Activated naive CD8-positive, alpha-beta T cell treated with anti-CD3 and anti-CD28 coated beads, Interleukin-2, amount 10 ng/mL, durations not matched to agents 7 days and 5 days (primary cell): ENCODE measurements at regions of chr12 and their contacts with region 1.

Region 1: GRCh38 chr12:22812531-22812930 is 187.6 kb downstream of the ETNK1 start:
- DNase-seq: no peak
- ATAC-seq: no peak
- H3K4me3 Mint-ChIP-seq: no peak overlapping the region
- H3K27ac Mint-ChIP-seq: no peak overlapping the region
- H3K4me1 Mint-ChIP-seq: no peaks in the 10 kb centered on the region
- H3K27me3 Mint-ChIP-seq: peaks cover 3% of the 10 kb centered on the region

Region 2: DNA sequence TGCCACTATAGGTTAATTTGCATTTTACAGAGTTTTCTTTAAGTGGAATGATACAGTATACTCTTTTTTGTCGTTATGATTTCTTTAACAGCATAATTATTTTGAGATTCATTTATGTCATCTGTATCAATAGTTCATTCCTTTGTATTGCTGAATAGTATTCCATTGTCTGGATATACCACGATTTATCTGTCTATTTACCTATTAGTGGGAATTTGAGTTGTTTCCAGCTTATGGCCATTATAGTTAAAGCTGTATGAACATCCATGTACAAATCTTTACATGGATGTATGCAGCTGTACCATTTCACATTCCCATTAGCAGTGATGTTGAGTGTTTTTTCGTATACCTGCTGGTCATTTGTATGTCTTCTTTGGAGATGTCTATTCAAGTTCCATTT is 23.6 kb before region 1 on chr12:
- POLR2A ChIA-PET with region 1: interaction called, 12 read pairs
- DNase-seq: no peak
- ATAC-seq: no peak
- H3K4me3 Mint-ChIP-seq: no peak overlapping the region
- H3K27ac Mint-ChIP-seq: no peak overlapping the region
- H3K4me1 Mint-ChIP-seq: no peaks in the 10 kb centered on the region
- H3K27me3 Mint-ChIP-seq: no peaks in the 10 kb centered on the region

Region 3: DNA sequence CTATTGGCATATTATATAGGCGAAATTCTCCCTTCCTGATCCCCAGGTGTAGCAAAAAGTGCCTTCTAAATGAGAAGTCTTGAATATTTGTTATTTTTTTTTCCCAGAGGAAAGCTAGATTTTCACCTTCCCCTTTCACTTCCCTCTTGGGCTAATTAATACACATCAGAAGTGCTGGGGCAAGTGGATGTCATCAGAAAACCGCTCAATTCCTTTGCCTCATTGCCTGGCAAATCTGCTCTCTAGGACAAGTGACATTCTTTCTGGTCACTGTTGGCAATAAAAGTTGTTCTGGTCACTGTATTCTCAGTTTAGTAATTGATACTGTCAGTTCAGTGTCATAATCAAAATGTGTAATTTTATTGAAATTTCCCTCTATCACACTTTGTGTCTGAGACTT is 13.0 kb before region 1 on chr12:
- POLR2A ChIA-PET with region 1: no interaction called
- DNase-seq: no peak
- ATAC-seq: no peak
- H3K4me3 Mint-ChIP-seq: no peak overlapping the region
- H3K27ac Mint-ChIP-seq: no peak overlapping the region
- H3K4me1 Mint-ChIP-seq: no peaks in the 10 kb centered on the region
- H3K27me3 Mint-ChIP-seq: no peaks in the 10 kb centered on the region